H1 (cell line): ENCODE measurements at regions of chr12 and their contacts with region 1.

Region 1: DNA sequence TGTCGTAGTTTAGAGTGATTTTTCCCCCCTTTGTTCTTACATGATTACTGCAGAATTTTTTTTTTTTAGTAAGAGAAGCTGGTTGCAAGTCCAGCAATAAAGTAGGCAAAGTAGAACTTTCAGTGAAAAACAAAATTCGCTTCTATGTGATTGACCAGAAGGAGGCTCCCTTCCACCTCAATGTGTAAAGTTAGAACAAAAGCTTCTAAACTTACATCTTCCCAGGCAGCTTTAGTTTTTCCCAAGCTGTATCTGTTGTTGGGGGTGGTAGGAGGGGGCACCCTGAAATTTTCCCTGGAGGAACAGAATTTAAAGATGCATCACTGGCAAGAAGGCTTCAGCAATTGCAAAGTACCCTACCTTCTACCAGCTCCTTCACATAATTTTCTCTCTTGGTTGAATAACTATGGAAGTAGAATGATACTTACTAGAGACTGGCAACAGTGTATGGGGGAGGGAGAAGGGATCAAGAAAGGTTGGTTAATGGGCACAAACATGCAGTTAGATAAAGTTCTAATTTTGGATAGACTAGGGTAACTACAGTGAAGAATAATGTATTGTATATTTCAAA is 87.3 kb upstream of the E2F7 start:
- DNase-seq: no peak
- H3K4me3 ChIP-seq: no peak overlapping the region
- H3K27ac ChIP-seq: no peak overlapping the region
- H3K4me1 ChIP-seq: no peaks in the 10 kb centered on the region
- H3K27me3 ChIP-seq: peaks cover 0 to 2% (median 0%) of the 10 kb centered on the region in 4 experiments; a peak in 1 of 7 replicates
- CTCF ChIP-seq: peak in 2 of 3 experiments; percentile 52 to 53; a peak in 3 of 4 replicates
- EP300 ChIP-seq: no peak
- POLR2A ChIP-seq: no peak
- RAD21 ChIP-seq: peak; percentile 79 to 86

Region 2: DNA sequence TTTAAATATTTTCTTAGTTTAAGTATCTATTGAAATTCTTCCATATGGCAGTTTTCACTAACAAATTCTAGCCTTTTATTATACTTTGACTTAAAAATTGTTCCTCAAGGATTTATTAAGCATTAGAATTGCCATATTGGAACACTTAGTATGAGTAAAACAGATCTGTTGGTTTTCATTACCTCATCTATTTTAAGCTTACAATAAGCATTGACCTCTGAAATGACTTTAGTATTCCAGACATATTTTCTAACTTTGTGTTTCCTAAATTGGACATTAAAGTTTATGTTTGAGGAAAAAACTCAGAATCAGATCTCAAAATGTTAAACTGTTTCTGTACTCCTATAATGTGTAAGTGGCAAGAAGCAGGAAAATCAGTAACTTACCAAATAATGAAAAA is 322.3 kb before region 1 on chr12:
- CTCF ChIA-PET with region 1: no interaction called
- POLR2A ChIA-PET with region 1: no interaction called
- DNase-seq: no peak
- H3K4me3 ChIP-seq: no peak overlapping the region
- H3K27ac ChIP-seq: no peak overlapping the region
- H3K4me1 ChIP-seq: no peaks in the 10 kb centered on the region
- H3K27me3 ChIP-seq: no peaks in the 10 kb centered on the region
- CTCF ChIP-seq: no peak
- EP300 ChIP-seq: no peak
- POLR2A ChIP-seq: no peak
- RAD21 ChIP-seq: no peak

Region 3: DNA sequence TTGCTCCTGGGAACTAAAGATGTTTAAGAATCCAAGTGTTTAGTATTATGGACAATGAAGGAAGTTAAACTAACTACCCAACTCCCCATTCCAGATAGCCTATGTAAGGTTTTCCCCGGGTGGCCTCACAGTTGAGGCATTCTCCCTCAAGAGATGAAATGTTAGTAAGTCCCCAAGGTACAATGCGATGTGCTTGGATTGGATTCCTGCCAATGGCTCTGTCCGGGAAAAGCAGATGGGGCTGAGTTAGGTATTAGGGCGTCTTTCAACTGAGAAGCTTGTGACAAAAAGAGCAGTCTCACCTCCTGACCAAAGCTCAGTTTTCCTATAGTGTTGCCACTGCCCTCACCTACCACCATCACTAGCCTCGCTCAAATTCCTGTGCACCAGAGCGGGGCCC is 22.5 kb before region 1 on chr12:
- CTCF ChIA-PET with region 1: interaction called, 10 read pairs
- POLR2A ChIA-PET with region 1: no interaction called
- DNase-seq: no peak
- H3K4me3 ChIP-seq: no peak overlapping the region
- H3K27ac ChIP-seq: no peak overlapping the region
- H3K4me1 ChIP-seq: no peaks in the 10 kb centered on the region
- H3K27me3 ChIP-seq: no peaks in the 10 kb centered on the region
- CTCF ChIP-seq: no peak
- EP300 ChIP-seq: no peak
- POLR2A ChIP-seq: no peak
- RAD21 ChIP-seq: no peak